ENCODE measurements at regions of chr15 and their contacts with region 1.

Region 1: DNA sequence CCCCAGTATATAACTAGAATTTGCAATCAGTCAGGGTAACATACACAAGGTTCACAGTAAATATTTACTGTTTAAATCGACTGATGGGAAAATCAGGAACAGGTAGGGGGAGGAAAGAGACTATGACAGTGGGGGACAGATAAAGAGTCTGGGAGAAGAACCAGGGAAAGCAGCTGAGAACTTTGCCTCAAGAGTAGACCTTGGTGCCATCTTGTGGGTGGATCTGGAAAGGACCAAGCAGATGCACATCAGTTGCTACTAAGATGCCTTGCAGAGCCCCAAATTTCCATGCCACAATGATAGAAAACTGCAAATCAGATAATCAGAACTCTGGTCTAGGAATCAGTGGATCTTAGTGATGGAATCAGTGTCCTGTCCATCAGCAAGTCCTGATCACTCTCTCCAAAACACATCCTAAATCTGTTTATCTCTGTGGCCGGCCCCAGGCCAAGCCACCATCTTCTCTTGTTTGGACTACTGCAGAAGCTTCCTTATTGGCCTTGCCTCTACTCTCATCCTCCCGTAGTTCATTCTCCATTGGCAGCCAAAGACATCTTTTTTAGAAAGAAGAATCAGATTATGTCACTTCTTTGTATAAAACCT is 62.7 kb downstream of the PDE8A start:
- DNase-seq: peak; percentile 69
- H3K4me3 ChIP-seq: no peak overlapping the region
- H3K27ac ChIP-seq: no peak overlapping the region
- H3K4me1 ChIP-seq: no peaks in the 10 kb centered on the region
- H3K27me3 ChIP-seq: no peaks in the 10 kb centered on the region
- CTCF ChIP-seq: peak in 2 of 3 experiments; percentile 41 to 49
- POLR2A ChIP-seq: no peak

Region 2: GRCh38 chr15:84859155-84859554 is 185.2 kb before region 1 on chr15:
- intact Hi-C with region 1: no loop called
- DNase-seq: no peak
- H3K4me3 ChIP-seq: no peak overlapping the region
- H3K27ac ChIP-seq: no peak overlapping the region
- H3K4me1 ChIP-seq: no peaks in the 10 kb centered on the region
- H3K27me3 ChIP-seq: no peaks in the 10 kb centered on the region
- CTCF ChIP-seq: no peak
- POLR2A ChIP-seq: no peak

Region 3: GRCh38 chr15:84955089-84955848 is 89.1 kb before region 1 on chr15:
- intact Hi-C with region 1: loop called (anchors 10 kb)
- DNase-seq: peak; percentile 82
- H3K4me3 ChIP-seq: no peak overlapping the region
- H3K27ac ChIP-seq: no peak overlapping the region
- H3K4me1 ChIP-seq: no peaks in the 10 kb centered on the region
- H3K27me3 ChIP-seq: no peaks in the 10 kb centered on the region
- CTCF ChIP-seq: peak; percentile 64 to 84 (median 80)
- POLR2A ChIP-seq: no peak

Measured in testis (tissue), 5 donors.